ENCODE measurements at regions of chr2 and their contacts with region 1.

Region 1: GRCh38 chr2:201572846-201573508 is 70.3 kb downstream of the TMEM237 start:
- DNase-seq: no peak
- H3K4me3 ChIP-seq: no peak overlapping the region
- H3K27ac ChIP-seq: no peak overlapping the region
- H3K4me1 ChIP-seq: no peaks in the 10 kb centered on the region
- H3K27me3 ChIP-seq: no peaks in the 10 kb centered on the region
- CTCF ChIP-seq: no peak
- EP300 ChIP-seq: no peak
- POLR2A ChIP-seq: no peak

Region 2: GRCh38 chr2:201618744-201619662 is 46.0 kb after region 1 on chr2:
- in situ Hi-C with region 1: no loop called
- intact Hi-C with region 1: loop called (anchors 1 kb)
- DNase-seq: peak; percentile 30
- H3K4me3 ChIP-seq: no peak overlapping the region
- H3K27ac ChIP-seq: no peak overlapping the region
- H3K4me1 ChIP-seq: no peaks in the 10 kb centered on the region
- H3K27me3 ChIP-seq: no peaks in the 10 kb centered on the region
- CTCF ChIP-seq: peak in 1 of 5 experiments; percentile 18
- EP300 ChIP-seq: no peak
- POLR2A ChIP-seq: no peak

Measured in transverse colon (tissue), 4 donors.